Heart right ventricle (tissue), 16 donors: ENCODE measurements at regions of chr10 and their contacts with region 1.

Region 1: DNA sequence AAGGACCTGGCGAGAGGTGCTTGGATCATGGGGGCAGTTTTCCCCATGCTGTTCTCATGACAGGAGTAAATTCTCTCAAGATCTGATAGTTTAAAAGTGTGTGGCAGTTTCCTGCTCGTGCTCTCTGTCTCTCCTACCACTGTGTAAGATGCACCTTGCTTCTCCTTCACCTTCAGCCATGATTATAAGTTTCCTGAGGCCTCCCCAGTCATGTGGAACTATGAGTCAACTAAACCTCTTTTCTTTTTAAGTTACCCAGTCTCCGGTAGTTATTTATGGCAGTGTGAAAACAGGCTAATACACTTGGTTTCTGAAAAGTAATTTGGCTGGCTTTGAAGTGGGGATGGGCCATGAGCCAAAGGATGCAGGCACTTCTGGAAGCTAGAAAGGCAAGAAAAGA is 268.0 kb upstream of the KAT6B start:
- DNase-seq: no peak
- ATAC-seq: no peak
- H3K4me3 ChIP-seq: no peak overlapping the region
- H3K27ac ChIP-seq: no peak overlapping the region
- H3K4me1 ChIP-seq: no peaks in the 10 kb centered on the region
- H3K27me3 ChIP-seq: no peaks in the 10 kb centered on the region
- CTCF ChIP-seq: no peak

Region 2: GRCh38 chr10:74502963-74503608 is 55.3 kb before region 1 on chr10:
- intact Hi-C with region 1: no loop called
- DNase-seq: no peak
- ATAC-seq: no peak
- H3K4me3 ChIP-seq: no peak overlapping the region
- H3K27ac ChIP-seq: peak overlapping the region in 1 of 10 donors; percentile 45
- H3K4me1 ChIP-seq: peaks cover 0 to 27% (median 13%) of the 10 kb centered on the region in 9 donors
- H3K27me3 ChIP-seq: no peaks in the 10 kb centered on the region
- CTCF ChIP-seq: no peak

Region 3: GRCh38 chr10:74542065-74542464 is 16.3 kb before region 1 on chr10:
- intact Hi-C with region 1: no loop called
- DNase-seq: no peak
- ATAC-seq: peak in 1 of 8 donors; percentile 73
- H3K4me3 ChIP-seq: no peak overlapping the region
- H3K27ac ChIP-seq: no peak overlapping the region
- H3K4me1 ChIP-seq: peaks cover 0 to 3% (median 0%) of the 10 kb centered on the region in 9 donors
- H3K27me3 ChIP-seq: no peaks in the 10 kb centered on the region
- CTCF ChIP-seq: no peak

Region 4: DNA sequence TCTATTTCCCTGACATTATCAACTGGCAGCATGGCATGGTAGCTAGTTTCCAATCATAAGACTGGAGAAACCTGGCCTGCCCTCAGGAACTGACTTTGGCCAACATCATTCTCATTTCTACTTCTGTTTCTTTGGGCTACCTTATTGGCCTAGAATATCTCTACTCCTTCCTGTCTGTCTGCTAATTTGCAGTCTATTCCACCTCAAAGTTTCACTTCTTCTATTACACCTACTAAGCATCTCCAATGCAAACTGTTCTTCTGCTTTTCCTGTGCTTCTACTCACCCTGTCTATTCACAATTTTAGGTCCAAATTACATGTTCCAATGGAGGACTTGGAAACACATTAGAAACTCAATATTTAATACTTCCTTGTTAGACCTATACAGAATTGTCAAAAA is 777.6 kb after region 1 on chr10:
- intact Hi-C with region 1: loop called in 1 of 10 experiments (anchors 5 kb)
- DNase-seq: no peak
- ATAC-seq: no peak
- H3K4me3 ChIP-seq: no peak overlapping the region
- H3K27ac ChIP-seq: no peak overlapping the region
- H3K4me1 ChIP-seq: peaks cover 0 to 4% (median 0%) of the 10 kb centered on the region in 9 donors
- H3K27me3 ChIP-seq: peaks cover 0 to 5% (median 0%) of the 10 kb centered on the region in 7 donors
- CTCF ChIP-seq: no peak